Activated T-helper 1 cell treated with anti-CD3 and anti-CD28 coated beads, Interleukin-12 subunit alpha, Interleukin-12 subunit beta, Interleukin-2, Interleukin-4 antibody, amounts not matched to agents 30 ng/mL and 10 ng/mL and 1 ng/mL, durations not matched to agents 14 hours and 24 hours and 36 hours (primary cell): ENCODE measurements at regions of chr13 and their contacts with region 1.

Region 1: DNA sequence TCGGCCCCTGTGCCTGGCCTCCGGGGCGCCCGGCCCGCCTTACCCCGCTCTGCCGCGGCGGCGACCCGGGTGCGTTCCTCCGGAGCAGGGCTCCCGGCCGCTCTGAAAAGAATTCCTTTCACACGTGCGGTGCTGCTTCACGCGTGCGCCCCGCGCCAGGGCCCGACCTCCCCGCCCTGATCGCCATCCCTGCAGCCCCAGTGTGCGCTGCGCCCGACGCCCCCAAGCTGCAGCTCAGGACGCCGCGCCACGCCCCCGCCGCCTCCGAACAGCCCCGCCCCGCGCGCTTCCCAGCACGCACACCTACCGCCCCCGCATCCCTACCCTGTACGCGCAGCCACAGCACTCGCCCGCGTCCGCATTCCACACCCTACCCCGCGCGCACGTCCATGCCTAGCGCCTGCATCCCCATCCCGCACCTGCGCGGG is at the start of gene GJA3:
- DNase-seq: peak; percentile 30
- H3K4me3 Mint-ChIP-seq: peak within 1 kb of the TSS; percentile 84
- H3K27ac Mint-ChIP-seq: peak within 1 kb of the TSS; percentile 67
- H3K4me1 Mint-ChIP-seq: peaks cover 17% of the 10 kb centered on the region
- H3K27me3 Mint-ChIP-seq: peaks cover 48% of the 10 kb centered on the region
- total RNA-seq, gene GJA3: not detected in 2 replicates

Region 2: DNA sequence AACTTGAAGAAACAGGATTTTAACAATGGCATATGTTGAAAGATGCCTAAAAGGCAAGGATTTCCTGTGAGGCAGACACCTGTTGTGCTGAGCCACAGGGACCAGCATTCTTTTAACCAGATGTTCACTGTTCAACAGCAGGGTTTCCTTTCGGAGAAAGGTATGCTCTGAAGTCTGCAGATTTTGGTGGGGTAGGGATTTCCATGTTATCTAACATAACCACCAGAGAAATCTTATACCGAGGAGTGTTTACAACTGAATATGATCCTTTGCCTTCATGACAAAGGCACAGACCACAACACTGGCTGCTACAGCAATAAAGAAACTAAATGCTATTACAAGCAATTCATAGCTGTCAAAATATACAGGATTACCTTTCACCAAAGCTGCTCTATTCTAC is 479.3 kb before region 1 on chr13:
- intact Hi-C with region 1: loop called (anchors 10 kb)
- DNase-seq: no peak
- H3K4me3 Mint-ChIP-seq: no peak overlapping the region
- H3K27ac Mint-ChIP-seq: no peak overlapping the region
- H3K4me1 Mint-ChIP-seq: peaks cover 24% of the 10 kb centered on the region
- H3K27me3 Mint-ChIP-seq: no peaks in the 10 kb centered on the region

Region 3: DNA sequence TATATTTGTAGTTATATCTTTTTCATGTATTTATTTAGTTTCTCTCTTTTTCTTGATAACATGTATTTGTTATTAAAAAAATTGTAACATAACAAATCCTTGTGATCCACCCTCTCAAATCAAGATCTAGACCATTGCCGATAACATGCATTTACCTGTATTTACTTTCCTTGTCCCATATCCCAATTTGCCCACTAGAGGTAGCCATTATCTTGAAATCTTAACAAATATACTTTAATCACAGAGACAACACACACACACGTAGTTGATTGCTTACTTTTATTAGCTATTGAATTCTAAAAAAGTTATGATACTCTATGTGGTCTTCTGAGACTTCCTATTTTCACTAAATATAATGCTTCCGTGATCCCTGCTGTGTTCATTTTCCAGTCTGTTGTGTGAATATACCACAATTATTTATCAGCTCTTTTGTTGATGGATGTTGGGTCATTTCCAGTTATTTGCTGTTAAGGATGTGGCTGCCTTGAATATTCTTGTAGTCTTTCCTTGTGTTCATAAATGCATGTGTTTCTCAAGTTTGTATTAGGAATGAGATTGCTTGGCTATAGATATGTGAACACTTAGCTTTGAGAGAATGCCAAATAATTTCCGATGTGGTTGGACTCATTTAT is 233.6 kb before region 1 on chr13:
- intact Hi-C with region 1: loop called (anchors 1 kb)
- DNase-seq: no peak
- H3K4me3 Mint-ChIP-seq: no peak overlapping the region
- H3K27ac Mint-ChIP-seq: no peak overlapping the region
- H3K4me1 Mint-ChIP-seq: no peaks in the 10 kb centered on the region
- H3K27me3 Mint-ChIP-seq: no peaks in the 10 kb centered on the region

Region 4: GRCh38 chr13:19984430-19985218 is 176.2 kb before region 1 on chr13:
- intact Hi-C with region 1: loop called (anchors 1 kb)
- DNase-seq: no peak
- H3K4me3 Mint-ChIP-seq: no peak overlapping the region
- H3K27ac Mint-ChIP-seq: no peak overlapping the region
- H3K4me1 Mint-ChIP-seq: peaks cover 29% of the 10 kb centered on the region
- H3K27me3 Mint-ChIP-seq: no peaks in the 10 kb centered on the region

Region 5: GRCh38 chr13:20090349-20090748 is 70.5 kb before region 1 on chr13:
- intact Hi-C with region 1: loop called (anchors 1 kb)
- DNase-seq: no peak
- H3K4me3 Mint-ChIP-seq: no peak overlapping the region
- H3K27ac Mint-ChIP-seq: no peak overlapping the region
- H3K4me1 Mint-ChIP-seq: no peaks in the 10 kb centered on the region
- H3K27me3 Mint-ChIP-seq: peaks cover 6% of the 10 kb centered on the region

Region 6: GRCh38 chr13:20136781-20137703 is 23.8 kb before region 1 on chr13:
- intact Hi-C with region 1: loop called (anchors 1 kb)
- DNase-seq: no peak
- H3K4me3 Mint-ChIP-seq: no peak overlapping the region
- H3K27ac Mint-ChIP-seq: no peak overlapping the region
- H3K4me1 Mint-ChIP-seq: peaks cover 4% of the 10 kb centered on the region
- H3K27me3 Mint-ChIP-seq: peaks cover 54% of the 10 kb centered on the region